CD8-positive, alpha-beta T cell (primary cell): ENCODE measurements at regions of chr12 and their contacts with region 1.

Region 1: DNA sequence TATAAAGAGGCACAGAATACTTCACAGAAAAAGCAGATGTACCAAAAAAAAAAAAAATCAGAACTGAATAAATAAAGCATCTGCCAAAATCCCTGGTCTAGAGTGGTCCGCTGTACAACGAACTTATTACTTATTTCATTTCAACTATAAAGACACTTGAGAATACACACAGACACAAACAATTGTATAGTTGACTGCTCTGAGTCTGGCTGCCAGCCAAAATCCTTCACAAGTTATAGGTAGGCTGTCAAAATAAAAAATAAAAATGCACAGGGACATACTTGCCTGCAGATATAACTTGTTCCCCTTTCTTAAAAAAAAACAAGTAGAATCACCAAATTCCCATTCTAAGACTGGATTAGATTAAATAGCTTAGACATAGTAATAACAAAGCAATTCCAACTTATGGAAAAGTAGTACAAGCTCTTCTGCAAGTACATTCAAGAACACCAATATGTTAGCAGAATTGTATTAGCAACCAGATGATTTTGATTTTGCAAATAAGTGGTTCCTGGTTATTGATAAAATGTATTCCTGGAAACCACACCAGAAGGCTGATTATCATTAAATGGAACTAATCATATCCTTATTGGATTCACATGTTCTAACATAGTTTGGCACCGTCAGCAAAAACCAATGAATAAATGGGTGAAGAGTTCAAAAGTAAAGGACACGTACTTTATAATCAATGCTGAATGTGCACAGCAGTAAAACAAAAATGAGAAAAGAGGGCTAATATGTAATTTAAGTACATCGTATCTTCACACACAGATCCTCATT is 248.5 kb downstream of the NELL2 start:
- DNase-seq: no peak
- ATAC-seq: no peak
- H3K4me3 ChIP-seq: no peak overlapping the region
- H3K4me3 Mint-ChIP-seq: no peak overlapping the region
- H3K27ac ChIP-seq: no peak overlapping the region
- H3K27ac Mint-ChIP-seq: no peak overlapping the region
- H3K4me1 ChIP-seq: no peaks in the 10 kb centered on the region
- H3K4me1 Mint-ChIP-seq: peaks cover 46% of the 10 kb centered on the region
- H3K27me3 ChIP-seq: no peaks in the 10 kb centered on the region
- H3K27me3 Mint-ChIP-seq: no peaks in the 10 kb centered on the region
- CTCF ChIP-seq: no peak

Region 2: DNA sequence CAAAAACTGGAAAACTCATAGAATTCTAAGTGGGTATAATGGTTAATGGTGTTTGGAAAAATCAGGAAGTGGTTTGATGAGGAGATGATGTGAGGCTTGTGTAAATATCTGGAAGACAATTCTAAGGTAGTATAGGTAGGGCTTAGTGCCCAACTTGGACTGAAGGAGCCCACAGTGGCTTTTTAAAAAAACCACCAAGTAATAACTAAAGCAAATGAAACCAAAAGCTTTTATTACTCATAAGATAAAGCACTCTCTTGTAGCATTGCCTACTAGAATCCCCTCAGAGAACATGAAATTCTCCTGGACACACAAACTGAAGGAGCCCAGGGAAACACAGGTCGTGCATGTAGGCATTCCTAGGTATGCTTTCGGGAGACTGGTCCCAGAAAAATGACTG is 75.9 kb before region 1 on chr12:
- CTCF ChIA-PET with region 1: no interaction called
- POLR2A ChIA-PET with region 1: no interaction called
- intact Hi-C with region 1: loop called in 1 of 2 experiments (anchors 2 kb)
- DNase-seq: no peak
- ATAC-seq: no peak
- H3K4me3 ChIP-seq: no peak overlapping the region
- H3K4me3 Mint-ChIP-seq: no peak overlapping the region
- H3K27ac ChIP-seq: no peak overlapping the region
- H3K27ac Mint-ChIP-seq: peak overlapping the region; percentile 64
- H3K4me1 ChIP-seq: peaks cover 17% of the 10 kb centered on the region
- H3K4me1 Mint-ChIP-seq: peaks cover 64% of the 10 kb centered on the region
- H3K27me3 ChIP-seq: no peaks in the 10 kb centered on the region
- H3K27me3 Mint-ChIP-seq: no peaks in the 10 kb centered on the region
- CTCF ChIP-seq: no peak

Region 3: DNA sequence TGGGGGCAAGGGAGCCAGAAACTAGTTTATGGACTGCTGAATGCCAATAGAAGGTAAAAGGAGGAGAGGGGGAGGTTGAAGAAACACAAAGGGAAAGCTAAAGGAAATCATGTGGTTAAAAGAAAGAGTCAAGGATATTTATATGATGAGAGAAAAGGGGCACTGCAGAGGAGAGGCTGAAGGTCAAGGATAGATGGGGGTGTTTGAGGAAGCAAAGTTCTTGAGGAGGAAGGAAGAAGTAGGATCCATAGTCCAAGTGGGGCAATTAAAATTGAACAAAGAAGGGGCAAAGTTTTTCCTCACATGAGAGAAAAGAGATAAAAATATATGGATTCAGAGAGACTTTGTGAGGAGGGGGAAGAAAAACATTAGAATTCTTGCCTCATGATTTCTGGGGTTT is 433.4 kb after region 1 on chr12:
- CTCF ChIA-PET with region 1: no interaction called
- POLR2A ChIA-PET with region 1: no interaction called
- intact Hi-C with region 1: no loop called
- DNase-seq: no peak
- ATAC-seq: no peak
- H3K4me3 ChIP-seq: no peak overlapping the region
- H3K4me3 Mint-ChIP-seq: no peak overlapping the region
- H3K27ac ChIP-seq: no peak overlapping the region
- H3K27ac Mint-ChIP-seq: no peak overlapping the region
- H3K4me1 ChIP-seq: no peaks in the 10 kb centered on the region
- H3K4me1 Mint-ChIP-seq: no peaks in the 10 kb centered on the region
- H3K27me3 ChIP-seq: no peaks in the 10 kb centered on the region
- H3K27me3 Mint-ChIP-seq: peaks cover 10% of the 10 kb centered on the region
- CTCF ChIP-seq: no peak